Left lung (tissue), 14 donors: ENCODE measurements at regions of chr9 and their contacts with region 1.

Region 1: GRCh38 chr9:113446323-113446740 is 17.2 kb upstream of the RGS3 start:
- DNase-seq: peak in 2 of 4 donors; percentile 27 to 50
- ATAC-seq: peak; percentile 76
- H3K4me3 ChIP-seq: no peak overlapping the region
- H3K27ac ChIP-seq: no peak overlapping the region
- H3K4me1 ChIP-seq: no peaks in the 10 kb centered on the region
- H3K27me3 ChIP-seq: no peaks in the 10 kb centered on the region
- CTCF ChIP-seq: peak; percentile 38 to 57

Region 2: GRCh38 chr9:113293285-113293878 is 152.9 kb before region 1 on chr9:
- intact Hi-C with region 1: no loop called
- DNase-seq: no peak
- ATAC-seq: no peak
- H3K4me3 ChIP-seq: no peak overlapping the region
- H3K27ac ChIP-seq: no peak overlapping the region
- H3K4me1 ChIP-seq: no peaks in the 10 kb centered on the region
- H3K27me3 ChIP-seq: no peaks in the 10 kb centered on the region
- CTCF ChIP-seq: no peak

Region 3: GRCh38 chr9:113558632-113559502 is 112.5 kb after region 1 on chr9:
- intact Hi-C with region 1: no loop called
- DNase-seq: peak in 2 of 4 donors; percentile 52 to 63
- ATAC-seq: peak; percentile 68
- H3K4me3 ChIP-seq: no peak overlapping the region
- H3K27ac ChIP-seq: no peak overlapping the region
- H3K4me1 ChIP-seq: peaks cover 5 to 23% of the 10 kb centered on the region in 2 donors
- H3K27me3 ChIP-seq: no peaks in the 10 kb centered on the region
- CTCF ChIP-seq: no peak

Region 4: GRCh38 chr9:113581865-113582697 is 135.7 kb after region 1 on chr9:
- intact Hi-C with region 1: loop called in 1 of 2 experiments (anchors 5 kb)
- DNase-seq: peak in 3 of 4 donors; percentile 75 to 90 (median 90)
- ATAC-seq: peak; percentile 78
- H3K4me3 ChIP-seq: peak overlapping the region; percentile 19 to 56
- H3K27ac ChIP-seq: peak overlapping the region; percentile 88 to 92
- H3K4me1 ChIP-seq: peaks cover 42 to 100% of the 10 kb centered on the region in 2 donors
- H3K27me3 ChIP-seq: no peaks in the 10 kb centered on the region
- CTCF ChIP-seq: no peak

Region 5: GRCh38 chr9:113646946-113647914 is 200.9 kb after region 1 on chr9:
- intact Hi-C with region 1: no loop called
- DNase-seq: no peak
- ATAC-seq: no peak
- H3K4me3 ChIP-seq: no peak overlapping the region
- H3K27ac ChIP-seq: no peak overlapping the region
- H3K4me1 ChIP-seq: no peaks in the 10 kb centered on the region
- H3K27me3 ChIP-seq: no peaks in the 10 kb centered on the region
- CTCF ChIP-seq: no peak

Region 6: GRCh38 chr9:113657703-113658544 is 211.6 kb after region 1 on chr9:
- intact Hi-C with region 1: loop called in 1 of 2 experiments (anchors 5 kb)
- DNase-seq: peak; percentile 81 to 90 (median 86)
- ATAC-seq: peak; percentile 93
- H3K4me3 ChIP-seq: no peak overlapping the region
- H3K27ac ChIP-seq: no peak overlapping the region
- H3K4me1 ChIP-seq: peaks cover 17 to 44% of the 10 kb centered on the region in 2 donors
- H3K27me3 ChIP-seq: no peaks in the 10 kb centered on the region
- CTCF ChIP-seq: peak; percentile 89 to 99